ENCODE measurements at regions of chr16 and their contacts with region 1.

Region 1: GRCh38 chr16:9008601-9009260 is 45.0 kb upstream of the USP7 start:
- DNase-seq: peak; percentile 38 to 56
- ATAC-seq: peak; percentile 74 to 91
- H3K4me3 ChIP-seq: peak overlapping the region; percentile 33 to 63 (median 45)
- H3K27ac ChIP-seq: no peak overlapping the region
- H3K4me1 ChIP-seq: peaks cover 0 to 6% of the 10 kb centered on the region in 2 donors
- H3K27me3 ChIP-seq: no peaks in the 10 kb centered on the region
- CTCF ChIP-seq: peak; percentile 56 to 84 (median 78)
- POLR2A ChIP-seq: no peak

Region 2: GRCh38 chr16:8278181-8278580 is 730.5 kb before region 1 on chr16:
- in situ Hi-C with region 1: no loop called
- intact Hi-C with region 1: no loop called
- DNase-seq: no peak
- ATAC-seq: no peak
- H3K4me3 ChIP-seq: no peak overlapping the region
- H3K27ac ChIP-seq: no peak overlapping the region
- H3K4me1 ChIP-seq: no peaks in the 10 kb centered on the region
- H3K27me3 ChIP-seq: no peaks in the 10 kb centered on the region
- CTCF ChIP-seq: no peak
- POLR2A ChIP-seq: no peak

Region 3: DNA sequence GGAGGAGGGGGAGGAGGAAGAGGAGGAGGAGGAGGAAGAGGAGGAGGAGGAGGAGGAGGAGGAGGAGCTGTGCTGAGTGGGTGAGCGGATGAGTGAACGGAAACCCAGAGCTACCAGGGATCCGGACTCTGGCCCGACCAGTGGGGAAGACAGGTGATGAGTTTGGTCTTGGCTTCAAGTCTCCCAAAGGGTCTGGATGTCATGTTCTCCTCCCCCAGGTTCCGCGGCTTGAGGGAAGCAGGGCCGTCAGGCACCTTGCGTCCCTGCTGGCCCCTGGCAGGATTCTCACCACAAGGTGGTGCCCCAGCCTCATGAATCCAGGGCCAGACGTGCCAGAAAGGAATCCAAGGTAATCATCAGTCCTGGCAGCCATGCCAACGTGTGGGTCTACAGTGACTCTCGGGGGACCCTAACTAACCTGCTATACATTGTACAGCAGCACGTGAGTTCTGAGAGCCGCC is 347.9 kb before region 1 on chr16:
- in situ Hi-C with region 1: loop called in 1 of 4 experiments (anchors 25 kb)
- intact Hi-C with region 1: loop called (anchors 2 kb)
- DNase-seq: peak in 1 of 2 donors; percentile 35
- ATAC-seq: peak; percentile 65 to 71
- H3K4me3 ChIP-seq: no peak overlapping the region
- H3K27ac ChIP-seq: no peak overlapping the region
- H3K4me1 ChIP-seq: no peaks in the 10 kb centered on the region
- H3K27me3 ChIP-seq: no peaks in the 10 kb centered on the region
- CTCF ChIP-seq: peak; percentile 44 to 77 (median 54)
- POLR2A ChIP-seq: no peak

Region 4: DNA sequence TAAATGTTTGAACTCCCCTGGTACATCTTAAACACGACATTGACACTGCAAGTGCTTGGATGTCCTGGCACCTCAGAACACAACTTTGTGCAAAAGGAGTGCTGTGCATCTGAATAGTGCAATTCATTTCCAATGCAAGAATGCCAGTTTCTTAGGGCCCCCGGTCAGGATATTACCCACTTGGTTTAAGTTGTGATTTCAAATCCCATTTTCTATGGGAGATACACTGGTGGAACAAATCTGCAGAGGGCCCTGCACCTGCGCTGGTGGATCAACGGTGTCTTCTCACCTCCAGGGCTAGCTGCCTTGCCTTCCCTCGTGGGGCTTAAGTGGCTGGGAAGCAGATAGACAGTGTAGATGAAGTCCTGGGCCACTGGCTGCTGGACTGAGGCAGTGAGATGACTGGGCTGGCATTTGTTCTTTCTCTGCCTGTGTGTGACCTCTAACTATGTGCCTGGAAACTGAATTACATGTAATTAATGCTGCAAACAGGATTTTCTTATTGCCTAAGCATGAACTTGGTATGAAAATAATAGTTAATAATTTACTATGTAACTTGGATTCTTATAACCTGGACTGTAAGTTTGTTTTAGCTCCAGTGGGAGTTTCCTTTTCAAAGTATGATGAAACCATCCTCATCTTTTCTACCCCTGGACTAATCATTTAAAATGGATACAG is 103.6 kb after region 1 on chr16:
- in situ Hi-C with region 1: no loop called
- intact Hi-C with region 1: no loop called
- DNase-seq: no peak
- ATAC-seq: no peak
- H3K4me3 ChIP-seq: no peak overlapping the region
- H3K27ac ChIP-seq: peak overlapping the region in 2 of 4 donors; percentile 15 to 31
- H3K4me1 ChIP-seq: peaks cover 84 to 90% of the 10 kb centered on the region in 2 donors
- H3K27me3 ChIP-seq: no peaks in the 10 kb centered on the region
- CTCF ChIP-seq: no peak
- POLR2A ChIP-seq: no peak

Region 5: GRCh38 chr16:9134739-9135138 is 126.0 kb after region 1 on chr16:
- in situ Hi-C with region 1: no loop called
- intact Hi-C with region 1: loop called (anchors 1 kb)
- DNase-seq: peak in 1 of 2 donors; percentile 45
- ATAC-seq: peak; percentile 42 to 51
- H3K4me3 ChIP-seq: no peak overlapping the region
- H3K27ac ChIP-seq: no peak overlapping the region
- H3K4me1 ChIP-seq: peaks cover 0 to 8% of the 10 kb centered on the region in 2 donors
- H3K27me3 ChIP-seq: no peaks in the 10 kb centered on the region
- CTCF ChIP-seq: peak in 4 of 5 experiments; percentile 38 to 61 (median 48)
- POLR2A ChIP-seq: no peak